Activated T-helper 1 cell treated with anti-CD3 and anti-CD28 coated beads, Interleukin-12 subunit alpha, Interleukin-12 subunit beta, Interleukin-2, Interleukin-4 antibody, amounts not matched to agents 30 ng/mL and 10 ng/mL and 1 ng/mL, durations not matched to agents 14 hours and 24 hours and 36 hours (primary cell): ENCODE measurements at regions of chr2 and their contacts with region 1.

Region 1: GRCh38 chr2:161104054-161104553 is 56.1 kb upstream of the TANK start:
- DNase-seq: no peak
- H3K4me3 Mint-ChIP-seq: peak overlapping the region; percentile 46
- H3K27ac Mint-ChIP-seq: peak overlapping the region; percentile 66
- H3K4me1 Mint-ChIP-seq: peaks cover 40% of the 10 kb centered on the region
- H3K27me3 Mint-ChIP-seq: no peaks in the 10 kb centered on the region

Region 2: DNA sequence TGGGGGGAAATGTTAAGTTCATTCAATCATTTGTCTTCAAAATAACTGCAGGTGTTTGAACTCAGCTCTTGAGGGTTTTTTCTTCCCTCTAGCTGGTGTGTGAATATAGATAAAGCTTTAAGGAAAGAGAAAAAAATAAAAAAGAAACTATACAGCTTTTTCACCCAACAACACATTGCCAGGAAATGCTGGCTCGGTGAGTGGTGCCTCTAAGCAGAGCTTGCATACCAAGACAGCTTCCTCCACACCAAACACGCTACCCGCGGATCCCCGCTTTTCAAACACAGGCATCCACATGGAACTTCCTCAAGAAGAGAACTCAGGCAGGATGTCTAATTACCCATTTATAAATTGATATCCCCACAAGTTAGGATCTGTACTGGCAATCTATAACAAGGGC is 13.7 kb before region 1 on chr2:
- intact Hi-C with region 1: loop called (anchors 2 kb)
- DNase-seq: peak; percentile 44
- H3K4me3 Mint-ChIP-seq: peak overlapping the region; percentile 64
- H3K27ac Mint-ChIP-seq: peak overlapping the region; percentile 87
- H3K4me1 Mint-ChIP-seq: peaks cover 55% of the 10 kb centered on the region
- H3K27me3 Mint-ChIP-seq: no peaks in the 10 kb centered on the region

Region 3: DNA sequence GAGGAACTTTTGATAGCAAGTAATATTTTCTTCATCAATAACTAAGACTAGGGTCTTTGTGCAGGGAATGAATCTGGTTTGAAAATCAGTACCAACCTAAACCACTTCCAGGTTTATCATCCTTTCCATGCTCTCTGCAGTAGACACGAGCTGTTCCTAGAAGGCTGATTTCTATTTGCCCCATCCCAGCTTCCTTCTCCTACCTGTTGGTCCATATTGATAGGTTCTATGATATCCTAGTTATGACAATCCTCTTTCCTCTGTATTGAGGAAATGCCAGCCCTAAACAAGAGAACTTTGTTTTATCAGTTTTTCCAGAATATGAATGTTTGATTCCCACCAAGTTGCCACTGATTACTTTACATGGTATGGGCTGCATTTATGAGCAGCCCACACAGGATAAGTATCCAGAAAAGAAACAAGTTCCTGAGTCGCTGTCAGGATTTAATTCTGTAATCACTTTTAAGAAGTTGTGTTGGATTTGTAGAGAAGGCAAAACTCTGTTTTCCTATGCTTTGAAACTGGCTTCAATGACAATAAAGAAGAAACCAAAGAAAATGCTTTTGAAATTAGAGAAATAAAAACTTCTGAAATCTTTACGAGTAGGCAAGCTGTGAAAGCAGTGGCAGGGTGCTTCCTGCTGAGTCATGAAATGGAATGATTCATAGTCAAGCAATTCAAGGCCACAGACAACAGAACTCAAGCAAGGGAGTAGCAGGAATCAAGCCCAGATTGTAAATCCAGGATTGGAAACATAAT is 18.8 kb after region 1 on chr2:
- intact Hi-C with region 1: loop called (anchors 1 kb)
- DNase-seq: no peak
- H3K4me3 Mint-ChIP-seq: peak overlapping the region; percentile 15
- H3K27ac Mint-ChIP-seq: peak overlapping the region; percentile 32
- H3K4me1 Mint-ChIP-seq: peaks cover 34% of the 10 kb centered on the region
- H3K27me3 Mint-ChIP-seq: no peaks in the 10 kb centered on the region